CD4-positive, alpha-beta T cell (primary cell): ENCODE measurements at regions of chr12 and their contacts with region 1.

Region 1: DNA sequence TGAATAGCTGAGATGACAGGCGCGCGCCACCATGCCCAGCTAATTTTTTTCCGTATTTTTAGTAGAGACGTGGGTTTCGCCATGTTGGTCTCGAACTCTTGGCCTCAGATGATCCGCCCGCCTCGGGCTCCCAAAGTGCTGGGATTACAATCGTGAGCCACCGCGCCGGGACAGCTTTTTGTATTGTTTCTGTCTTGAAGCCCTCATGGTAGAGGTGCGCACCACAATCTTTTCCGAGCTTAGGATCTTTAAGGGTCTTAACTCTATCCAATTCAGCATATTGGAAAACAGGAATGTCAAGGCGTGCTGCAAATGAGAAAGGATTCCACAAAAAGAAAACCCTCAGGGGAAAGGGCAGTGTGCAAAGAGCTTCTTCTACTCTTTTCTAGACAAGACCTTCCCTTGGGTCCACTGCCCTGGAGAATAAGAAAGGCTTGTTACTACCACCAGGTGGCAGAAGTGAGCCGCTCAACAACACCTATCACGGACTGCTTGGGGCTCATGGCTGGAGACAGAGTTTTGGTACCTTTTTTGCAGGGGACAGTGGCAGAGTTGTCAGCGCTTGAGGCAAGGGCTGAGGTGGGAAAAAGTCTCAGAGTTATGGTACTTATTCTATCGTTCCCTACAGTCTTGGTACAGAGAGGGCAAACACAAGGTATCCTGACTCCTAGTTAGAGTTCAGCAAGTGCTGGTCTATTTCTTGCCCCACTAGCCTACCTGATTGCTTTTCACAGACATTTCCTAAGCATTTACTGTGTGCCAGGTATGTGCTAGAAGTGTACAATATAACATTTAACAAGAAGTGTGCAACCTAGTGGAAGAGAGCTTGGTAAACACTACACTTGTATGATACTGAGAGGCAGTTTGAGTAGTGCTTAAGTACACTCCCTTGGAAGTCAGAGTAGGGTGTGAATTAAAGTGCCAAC is 16.4 kb upstream of the SP7 start:
- DNase-seq: peak; percentile 73 to 94 (median 82)
- ATAC-seq: peak; percentile 100
- H3K4me3 ChIP-seq: no peak overlapping the region
- H3K4me3 Mint-ChIP-seq: no peak overlapping the region
- H3K27ac ChIP-seq: no peak overlapping the region
- H3K27ac Mint-ChIP-seq: no peak overlapping the region
- H3K4me1 ChIP-seq: peaks cover 8% of the 10 kb centered on the region
- H3K4me1 Mint-ChIP-seq: peaks cover 7% of the 10 kb centered on the region
- H3K27me3 ChIP-seq: no peaks in the 10 kb centered on the region
- H3K27me3 Mint-ChIP-seq: no peaks in the 10 kb centered on the region
- CTCF ChIP-seq: peak; percentile 82

Region 2: GRCh38 chr12:53414756-53415417 is 62.3 kb after region 1 on chr12:
- CTCF ChIA-PET with region 1: interaction called, 44 read pairs
- POLR2A ChIA-PET with region 1: interaction called, 4 read pairs
- intact Hi-C with region 1: no loop called
- DNase-seq: no peak
- ATAC-seq: no peak
- H3K4me3 ChIP-seq: no peak overlapping the region
- H3K4me3 Mint-ChIP-seq: no peak overlapping the region
- H3K27ac ChIP-seq: no peak overlapping the region
- H3K27ac Mint-ChIP-seq: peak overlapping the region; percentile 78
- H3K4me1 ChIP-seq: peaks cover 11% of the 10 kb centered on the region
- H3K4me1 Mint-ChIP-seq: peaks cover 63% of the 10 kb centered on the region
- H3K27me3 ChIP-seq: no peaks in the 10 kb centered on the region
- H3K27me3 Mint-ChIP-seq: no peaks in the 10 kb centered on the region
- CTCF ChIP-seq: no peak